A549 (cell line): ENCODE measurements at regions of chr12 and their contacts with region 1.

Region 1: DNA sequence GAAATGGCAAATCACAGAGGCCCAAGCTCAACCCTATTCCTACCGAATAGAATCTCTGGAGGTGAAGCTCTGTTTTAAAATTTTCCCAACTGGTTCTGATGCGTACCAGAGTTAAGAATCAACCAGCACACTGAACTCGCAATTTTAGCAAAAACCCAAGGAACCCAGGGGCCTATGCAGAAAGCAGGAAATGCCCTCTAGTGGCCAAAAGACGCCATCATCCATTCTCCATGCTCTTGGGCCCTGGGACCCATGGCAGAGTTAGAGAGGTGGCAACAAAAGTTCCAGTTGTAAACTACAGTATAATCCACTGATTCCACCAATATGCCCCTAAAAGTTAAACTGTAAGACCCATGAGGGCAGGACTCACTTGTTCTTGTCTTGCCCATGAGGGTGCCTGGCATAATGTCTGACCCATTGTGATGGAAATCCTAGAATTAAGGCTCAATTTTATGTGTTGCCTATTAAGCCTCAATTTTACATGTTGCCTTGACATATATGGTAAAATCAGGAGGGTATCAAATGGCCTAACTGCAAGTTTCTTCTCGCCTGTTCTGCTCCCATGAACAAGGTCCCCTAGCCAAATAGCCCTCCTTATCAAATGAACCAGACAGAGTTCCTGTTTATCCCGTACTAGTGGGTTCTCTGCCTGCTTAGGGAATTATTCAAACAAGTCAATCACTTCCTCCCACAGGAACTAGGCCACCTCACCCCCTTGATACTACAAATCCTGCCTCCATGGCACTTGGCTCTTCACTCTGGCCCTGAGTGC is 137.5 kb upstream of the CPM start:
- DNase-seq: peak; percentile 60 to 70
- ATAC-seq: peak; percentile 90 to 94
- H3K4me3 ChIP-seq: no peak overlapping the region
- H3K27ac ChIP-seq: peak overlapping the region in 1 of 2 experiments; percentile 59; a peak in 1 of 6 replicates
- H3K4me1 ChIP-seq: peaks cover 26% of the 10 kb centered on the region
- CTCF ChIP-seq: peak; percentile 93
- EP300 ChIP-seq: no peak
- POLR2A ChIP-seq: no peak
- RAD21 ChIP-seq: peak; percentile 92 to 97

Region 2: DNA sequence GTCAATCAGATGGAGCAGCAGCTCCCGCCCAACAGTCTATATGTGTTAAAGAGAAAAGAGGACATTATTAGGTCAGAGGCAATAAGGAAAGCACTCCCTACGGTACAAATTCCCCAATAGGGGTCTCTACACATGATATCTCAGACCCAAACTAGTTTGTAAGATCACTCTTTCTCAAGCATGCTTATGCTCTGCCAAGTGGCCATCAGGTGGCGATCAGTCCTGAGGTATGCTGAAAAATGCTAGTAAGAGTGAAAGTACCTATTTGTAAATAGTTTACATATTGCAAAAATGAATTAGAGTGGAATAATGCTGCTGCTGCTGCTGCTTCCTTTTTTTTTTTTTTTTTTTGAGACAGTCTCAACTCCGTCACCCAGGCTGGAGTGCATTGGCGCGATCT is 198.6 kb before region 1 on chr12:
- CTCF ChIA-PET with region 1: interaction called, 69 read pairs
- POLR2A ChIA-PET with region 1: no interaction called
- DNase-seq: peak in 1 of 2 experiments; percentile 47
- ATAC-seq: peak in 1 of 2 experiments; percentile 68; a peak in 3 of 6 replicates
- H3K4me3 ChIP-seq: no peak overlapping the region
- H3K27ac ChIP-seq: no peak overlapping the region
- H3K4me1 ChIP-seq: no peaks in the 10 kb centered on the region
- CTCF ChIP-seq: peak; percentile 32; the same call in 1 of the 3 replicates
- EP300 ChIP-seq: no peak
- POLR2A ChIP-seq: no peak
- RAD21 ChIP-seq: peak; percentile 22 to 64; a peak in 2 of 5 replicates

Region 3: GRCh38 chr12:68899251-68899771 is 171.2 kb before region 1 on chr12:
- CTCF ChIA-PET with region 1: interaction called, 13 read pairs
- POLR2A ChIA-PET with region 1: no interaction called
- DNase-seq: peak; percentile 25 to 52
- ATAC-seq: peak in 1 of 2 experiments; percentile 73; a peak in 3 of 6 replicates
- H3K4me3 ChIP-seq: no peak overlapping the region
- H3K27ac ChIP-seq: no peak overlapping the region
- H3K4me1 ChIP-seq: peaks cover 7% of the 10 kb centered on the region; the same call in 1 of the 3 replicates
- CTCF ChIP-seq: peak; percentile 50
- EP300 ChIP-seq: no peak
- POLR2A ChIP-seq: no peak
- RAD21 ChIP-seq: peak; percentile 72 to 76

Region 4: DNA sequence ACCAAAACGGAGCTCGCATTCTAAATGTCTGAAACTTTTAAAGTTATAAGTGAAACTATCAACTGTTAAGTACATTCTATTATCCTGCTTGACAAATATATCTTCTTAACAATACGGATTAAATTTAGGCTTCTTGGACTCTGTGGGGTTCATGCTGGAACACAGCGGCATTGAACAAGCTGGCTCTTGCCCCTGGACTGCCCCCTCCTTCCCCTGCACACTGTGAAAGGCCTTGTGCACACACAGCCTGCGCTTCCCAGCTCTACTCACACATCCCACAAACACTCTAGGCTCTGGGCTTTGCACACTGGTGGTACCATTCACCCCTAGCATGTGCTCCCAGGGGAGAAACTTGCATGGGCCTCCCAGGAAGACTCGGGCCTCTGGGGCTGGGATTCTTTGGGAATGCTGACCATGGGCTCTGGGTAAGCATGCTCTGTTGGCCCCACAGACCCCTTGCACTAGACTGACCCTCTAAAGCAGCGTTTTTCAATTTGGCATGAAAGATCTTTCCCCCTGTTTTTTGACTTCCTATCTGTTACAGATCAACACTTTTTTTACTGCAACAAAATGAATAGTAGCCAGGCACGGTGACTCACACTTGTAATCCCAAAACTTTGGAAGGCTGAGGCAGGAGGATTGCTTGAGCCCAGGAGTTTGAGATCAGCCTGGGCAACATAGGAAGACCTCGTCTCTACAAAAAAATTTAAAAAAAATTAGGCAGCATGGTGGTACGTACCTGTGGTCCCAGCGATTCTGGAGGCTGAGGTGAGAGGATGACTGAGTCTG is 41.4 kb before region 1 on chr12:
- CTCF ChIA-PET with region 1: interaction called, 14 read pairs
- POLR2A ChIA-PET with region 1: no interaction called
- DNase-seq: no peak
- ATAC-seq: no peak
- H3K4me3 ChIP-seq: no peak overlapping the region
- H3K27ac ChIP-seq: 0 out of 6 replicates have a peak overlapping the region, but pooled peaks of 1 of the 2 experiments have one; percentile 6
- H3K4me1 ChIP-seq: peaks cover 20% of the 10 kb centered on the region
- CTCF ChIP-seq: no peak
- EP300 ChIP-seq: no peak
- POLR2A ChIP-seq: no peak
- RAD21 ChIP-seq: no peak

Region 5: DNA sequence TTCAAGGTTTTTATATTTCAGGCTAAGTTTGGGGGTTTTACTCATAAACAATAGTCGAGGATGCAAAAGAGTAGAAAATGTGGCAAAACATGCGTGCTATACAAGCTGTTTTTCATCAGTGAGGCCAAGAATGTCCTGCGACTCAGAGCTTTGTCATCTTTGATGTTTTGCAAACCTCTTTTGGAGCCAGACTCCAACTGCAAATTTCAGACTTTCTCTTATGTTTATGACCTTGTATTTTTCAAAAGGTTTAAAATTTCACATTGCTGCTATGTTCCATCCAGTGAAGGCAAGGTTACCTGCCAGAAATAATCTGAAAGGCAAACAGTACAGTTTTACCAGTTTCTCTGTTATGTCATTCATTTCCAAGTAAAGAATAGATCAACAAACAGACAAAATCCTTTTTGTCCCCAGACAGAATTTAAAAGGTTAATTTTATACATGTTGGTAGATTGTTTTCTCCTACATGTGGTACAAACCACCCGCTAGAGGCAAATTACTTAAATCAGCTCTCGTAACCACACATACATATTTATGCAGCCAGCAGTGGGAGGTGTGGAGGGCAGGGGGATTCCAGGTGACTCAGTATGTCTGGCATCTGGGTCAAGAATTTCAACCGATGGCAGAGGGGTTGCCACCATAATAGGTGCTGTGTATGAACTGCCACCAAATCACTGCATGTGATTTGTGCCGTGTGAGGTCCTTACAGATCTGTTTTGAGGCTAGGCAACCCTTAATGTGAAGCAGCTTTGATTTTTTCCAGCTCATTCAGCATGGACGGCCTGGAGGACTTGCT is 17.7 kb before region 1 on chr12:
- CTCF ChIA-PET with region 1: interaction called, 13 read pairs
- POLR2A ChIA-PET with region 1: no interaction called
- DNase-seq: peak; percentile 66 to 81
- ATAC-seq: peak; percentile 88 to 95
- H3K4me3 ChIP-seq: no peak overlapping the region
- H3K27ac ChIP-seq: peak overlapping the region; percentile 59 to 83
- H3K4me1 ChIP-seq: peaks cover 17% of the 10 kb centered on the region
- CTCF ChIP-seq: no peak
- EP300 ChIP-seq: peak in 1 of 2 experiments; percentile 16; a peak in 1 of 5 replicates
- POLR2A ChIP-seq: no peak
- RAD21 ChIP-seq: no peak; a peak in 1 of 5 replicates

Region 6: GRCh38 chr12:69059483-69060457 is 10.7 kb before region 1 on chr12:
- CTCF ChIA-PET with region 1: interaction called, 17 read pairs
- POLR2A ChIA-PET with region 1: no interaction called
- DNase-seq: peak; percentile 47 to 79
- ATAC-seq: peak; percentile 77 to 91; a peak in 5 of 6 replicates
- H3K4me3 ChIP-seq: no peak overlapping the region
- H3K27ac ChIP-seq: peak overlapping the region; percentile 46 to 79; a peak in 5 of 6 replicates
- H3K4me1 ChIP-seq: peaks cover 11% of the 10 kb centered on the region
- CTCF ChIP-seq: no peak
- EP300 ChIP-seq: no peak
- POLR2A ChIP-seq: no peak
- RAD21 ChIP-seq: no peak